Heart left ventricle (tissue), 16 donors: ENCODE measurements at regions of chr9 and their contacts with region 1.

Region 1: GRCh38 chr9:131915181-131915580 is 164.5 kb downstream of the MED27 start:
- DNase-seq: no peak
- ATAC-seq: no peak
- H3K4me3 ChIP-seq: no peak overlapping the region
- H3K27ac ChIP-seq: no peak overlapping the region
- H3K4me1 ChIP-seq: peaks cover 0 to 12% (median 0%) of the 10 kb centered on the region in 12 donors
- H3K27me3 ChIP-seq: no peaks in the 10 kb centered on the region
- CTCF ChIP-seq: no peak
- POLR2A ChIP-seq: no peak

Region 2: GRCh38 chr9:131854896-131855613 is 60.1 kb before region 1 on chr9:
- intact Hi-C with region 1: no loop called
- DNase-seq: no peak
- ATAC-seq: peak in 3 of 4 donors; percentile 16 to 61 (median 34)
- H3K4me3 ChIP-seq: peak overlapping the region in 3 of 12 donors; percentile 7 to 12 (median 9)
- H3K27ac ChIP-seq: no peak overlapping the region
- H3K4me1 ChIP-seq: peaks cover 0 to 9% (median 0%) of the 10 kb centered on the region in 12 donors
- H3K27me3 ChIP-seq: no peaks in the 10 kb centered on the region
- CTCF ChIP-seq: no peak
- POLR2A ChIP-seq: no peak

Region 3: GRCh38 chr9:131982671-131983239 is 67.6 kb after region 1 on chr9:
- intact Hi-C with region 1: loop called in 1 of 10 experiments (anchors 10 kb)
- DNase-seq: no peak
- ATAC-seq: no peak
- H3K4me3 ChIP-seq: no peak overlapping the region
- H3K27ac ChIP-seq: no peak overlapping the region
- H3K4me1 ChIP-seq: peaks cover 0 to 22% (median 10%) of the 10 kb centered on the region in 12 donors
- H3K27me3 ChIP-seq: no peaks in the 10 kb centered on the region
- CTCF ChIP-seq: no peak
- POLR2A ChIP-seq: no peak

Region 4: DNA sequence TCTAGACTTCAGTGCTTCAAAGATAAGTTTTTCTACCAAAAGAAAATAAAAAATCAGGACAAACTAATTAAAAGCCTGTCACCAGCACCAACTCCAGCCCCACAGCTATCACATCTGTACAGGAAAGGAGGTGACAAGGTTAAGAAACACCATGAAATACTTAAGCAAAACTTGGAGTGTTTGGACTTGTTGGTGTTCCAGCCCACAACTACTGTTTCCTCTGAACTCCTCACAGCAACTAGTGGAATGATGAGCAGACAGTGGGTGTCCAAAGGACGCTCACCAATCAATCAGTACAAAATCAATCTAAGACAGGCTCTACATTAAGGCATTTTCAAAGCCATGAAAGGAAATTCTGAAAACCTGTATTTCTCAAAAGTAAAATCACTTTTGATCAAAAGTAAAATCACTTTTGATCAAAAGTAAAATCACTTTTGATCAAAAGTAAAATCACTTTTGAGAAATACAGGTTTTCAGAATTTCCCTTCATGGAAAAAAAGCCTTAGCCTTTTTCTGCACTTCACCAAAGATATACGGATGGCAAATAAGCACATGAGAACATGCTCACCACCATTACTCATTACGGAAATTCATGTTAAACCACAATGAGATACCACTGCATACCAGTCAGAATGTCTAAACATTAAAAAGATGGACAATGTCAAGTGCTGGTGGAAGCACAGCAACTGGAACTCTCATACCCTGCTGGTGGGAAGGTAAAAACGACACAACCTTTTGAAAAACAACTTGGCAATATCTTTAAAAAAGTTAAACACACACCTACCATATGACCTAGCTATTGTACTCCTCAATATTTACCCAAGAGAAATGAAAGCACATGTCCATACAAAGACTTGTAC is 84.7 kb after region 1 on chr9:
- intact Hi-C with region 1: no loop called
- DNase-seq: no peak
- ATAC-seq: no peak
- H3K4me3 ChIP-seq: no peak overlapping the region
- H3K27ac ChIP-seq: no peak overlapping the region
- H3K4me1 ChIP-seq: peaks cover 0 to 27% (median 13%) of the 10 kb centered on the region in 12 donors
- H3K27me3 ChIP-seq: no peaks in the 10 kb centered on the region
- CTCF ChIP-seq: no peak
- POLR2A ChIP-seq: no peak